CD4-positive, alpha-beta T cell (primary cell): ENCODE measurements at regions of chr10 and their contacts with region 1.

Region 1: GRCh38 chr10:97334370-97335175 is at the start of gene FRAT2:
- DNase-seq: peak; percentile 78 to 95 (median 85)
- ATAC-seq: peak; percentile 88
- H3K4me3 ChIP-seq: peak within 1 kb of the TSS; percentile 76
- H3K4me3 Mint-ChIP-seq: peak within 1 kb of the TSS; percentile 96
- H3K27ac ChIP-seq: peak within 1 kb of the TSS; percentile 97
- H3K27ac Mint-ChIP-seq: peak within 1 kb of the TSS; percentile 91
- H3K4me1 ChIP-seq: peaks cover 43% of the 10 kb centered on the region
- H3K4me1 Mint-ChIP-seq: peaks cover 50% of the 10 kb centered on the region
- H3K27me3 ChIP-seq: no peaks in the 10 kb centered on the region
- H3K27me3 Mint-ChIP-seq: peaks cover 3% of the 10 kb centered on the region
- CTCF ChIP-seq: no peak
- total RNA-seq, gene FRAT2: 27.0 to 27.6 TPM

Region 2: GRCh38 chr10:97292097-97292862 is 42.3 kb before region 1 on chr10 and contains the start of gene ARHGAP19:
- CTCF ChIA-PET with region 1: no interaction called
- POLR2A ChIA-PET with region 1: interaction called, 6 read pairs
- intact Hi-C with region 1: loop called (anchors 1 to 2 kb)
- DNase-seq: peak; percentile 86 to 97 (median 90)
- ATAC-seq: peak; percentile 99
- H3K4me3 ChIP-seq: peak within 1 kb of the TSS; percentile 72
- H3K4me3 Mint-ChIP-seq: peak within 1 kb of the TSS; percentile 95
- H3K27ac ChIP-seq: peak within 1 kb of the TSS; percentile 49 to 65
- H3K27ac Mint-ChIP-seq: peak within 1 kb of the TSS; percentile 50
- H3K4me1 ChIP-seq: peaks cover 13% of the 10 kb centered on the region
- H3K4me1 Mint-ChIP-seq: peaks cover 18% of the 10 kb centered on the region
- H3K27me3 ChIP-seq: no peaks in the 10 kb centered on the region
- H3K27me3 Mint-ChIP-seq: no peaks in the 10 kb centered on the region
- CTCF ChIP-seq: no peak
- total RNA-seq, gene ARHGAP19: 6.9 to 8.8 TPM

Region 3: GRCh38 chr10:97318772-97319651 is 15.6 kb before region 1 on chr10 and contains the start of gene FRAT1:
- CTCF ChIA-PET with region 1: interaction called, 24 read pairs
- POLR2A ChIA-PET with region 1: interaction called, 178 read pairs
- intact Hi-C with region 1: loop called (anchors 1 kb)
- DNase-seq: peak; percentile 85 to 96 (median 89)
- ATAC-seq: peak; percentile 73
- H3K4me3 ChIP-seq: peak within 1 kb of the TSS; percentile 80
- H3K4me3 Mint-ChIP-seq: peak within 1 kb of the TSS; percentile 97
- H3K27ac ChIP-seq: peak within 1 kb of the TSS; percentile 99 to 100
- H3K27ac Mint-ChIP-seq: peak within 1 kb of the TSS; percentile 98
- H3K4me1 ChIP-seq: peaks cover 36% of the 10 kb centered on the region
- H3K4me1 Mint-ChIP-seq: peaks cover 38% of the 10 kb centered on the region
- H3K27me3 ChIP-seq: no peaks in the 10 kb centered on the region
- H3K27me3 Mint-ChIP-seq: no peaks in the 10 kb centered on the region
- CTCF ChIP-seq: no peak
- total RNA-seq, gene FRAT1: 45.2 to 45.5 TPM

Region 4: DNA sequence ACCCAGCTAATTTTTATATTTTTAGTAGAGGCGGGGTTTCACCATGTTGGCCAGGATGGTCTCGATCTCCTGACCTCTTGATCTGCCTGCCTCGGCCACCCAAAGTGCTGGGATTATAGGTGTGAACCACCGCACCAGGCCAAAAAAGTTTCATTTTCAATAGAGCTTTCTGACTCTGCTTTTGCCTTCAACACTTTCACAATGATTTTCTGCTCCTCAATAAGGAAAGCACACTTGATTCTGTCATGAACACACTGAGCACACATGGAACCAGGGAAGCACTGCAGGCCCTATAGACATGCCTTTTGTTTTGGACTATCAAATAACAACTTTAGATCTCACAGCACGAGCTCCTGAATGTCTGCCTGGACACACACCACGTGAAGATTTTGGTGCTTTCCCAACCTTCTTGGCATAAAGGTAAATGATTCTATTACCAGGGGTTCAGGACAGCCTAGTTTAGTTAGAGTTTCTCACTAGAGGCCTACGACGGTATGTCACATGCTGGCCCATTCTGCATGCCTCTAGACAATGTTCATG is 58.5 kb after region 1 on chr10:
- CTCF ChIA-PET with region 1: no interaction called
- POLR2A ChIA-PET with region 1: no interaction called
- intact Hi-C with region 1: no loop called
- DNase-seq: no peak
- ATAC-seq: no peak
- H3K4me3 ChIP-seq: no peak overlapping the region
- H3K4me3 Mint-ChIP-seq: no peak overlapping the region
- H3K27ac ChIP-seq: no peak overlapping the region
- H3K27ac Mint-ChIP-seq: no peak overlapping the region
- H3K4me1 ChIP-seq: no peaks in the 10 kb centered on the region
- H3K4me1 Mint-ChIP-seq: no peaks in the 10 kb centered on the region
- H3K27me3 ChIP-seq: no peaks in the 10 kb centered on the region
- H3K27me3 Mint-ChIP-seq: no peaks in the 10 kb centered on the region
- CTCF ChIP-seq: no peak

Region 5: GRCh38 chr10:97412891-97413304 is 78.3 kb after region 1 on chr10:
- CTCF ChIA-PET with region 1: no interaction called
- POLR2A ChIA-PET with region 1: no interaction called
- intact Hi-C with region 1: no loop called
- DNase-seq: no peak
- ATAC-seq: no peak
- H3K4me3 ChIP-seq: no peak overlapping the region
- H3K4me3 Mint-ChIP-seq: peak overlapping the region; percentile 18
- H3K27ac ChIP-seq: no peak overlapping the region
- H3K27ac Mint-ChIP-seq: peak overlapping the region; percentile 74
- H3K4me1 ChIP-seq: peaks cover 38% of the 10 kb centered on the region
- H3K4me1 Mint-ChIP-seq: peaks cover 36% of the 10 kb centered on the region
- H3K27me3 ChIP-seq: no peaks in the 10 kb centered on the region
- H3K27me3 Mint-ChIP-seq: no peaks in the 10 kb centered on the region
- CTCF ChIP-seq: no peak

Region 6: DNA sequence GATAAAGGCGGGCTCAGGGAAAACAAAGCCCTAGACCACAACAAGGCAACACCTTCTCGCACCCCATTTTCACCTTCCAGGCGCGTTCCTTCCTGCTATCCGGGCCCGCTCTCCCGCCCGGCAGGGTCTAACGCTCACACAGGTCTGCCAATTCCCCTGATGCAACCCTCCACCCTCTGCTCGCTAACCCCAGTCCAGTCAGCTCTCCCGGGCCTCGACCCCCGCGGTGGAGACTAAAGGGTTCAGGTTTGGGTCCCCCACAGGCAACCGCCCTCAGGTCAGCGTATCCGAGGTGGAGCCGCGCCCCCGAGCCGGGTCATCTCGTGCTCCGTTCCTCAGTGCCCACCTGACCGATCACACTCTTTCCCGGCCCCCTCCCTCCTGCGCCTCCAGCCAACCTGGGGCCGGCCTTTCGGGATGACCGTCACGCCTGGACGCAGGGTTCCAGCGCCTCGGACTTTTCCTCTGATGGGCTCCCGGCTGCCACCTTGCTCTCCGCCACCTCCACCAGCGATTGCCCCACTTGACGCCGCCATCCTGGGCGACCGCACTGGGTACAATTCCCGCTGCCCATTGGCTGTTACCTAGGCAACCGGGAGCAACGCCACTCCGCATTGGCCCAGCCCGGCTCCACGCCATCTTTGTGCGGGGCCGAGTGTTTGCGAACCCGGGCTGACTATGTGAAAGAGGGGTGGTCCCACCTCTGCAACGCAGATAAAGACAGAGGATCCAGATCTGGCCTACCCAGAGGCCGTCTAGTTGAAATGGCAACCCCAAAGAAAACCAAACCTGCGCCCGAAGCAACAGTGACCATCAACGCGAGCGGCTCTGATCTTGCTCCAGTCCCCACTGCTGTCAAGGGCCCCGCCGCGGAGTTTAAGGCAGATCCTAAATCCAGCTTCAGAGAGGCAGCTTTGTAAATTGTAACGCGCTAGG is 298.6 kb after region 1 on chr10 and contains the start of gene MORN4:
- CTCF ChIA-PET with region 1: no interaction called
- POLR2A ChIA-PET with region 1: no interaction called
- intact Hi-C with region 1: loop called in 1 of 2 experiments (anchors 5 kb)
- DNase-seq: peak; percentile 85 to 95 (median 89)
- ATAC-seq: peak; percentile 99
- H3K4me3 ChIP-seq: peak within 1 kb of the TSS; percentile 98
- H3K4me3 Mint-ChIP-seq: peak within 1 kb of the TSS; percentile 94
- H3K27ac ChIP-seq: no peak within 1 kb of the TSS
- H3K27ac Mint-ChIP-seq: peak within 1 kb of the TSS; percentile 71
- H3K4me1 ChIP-seq: peaks cover 18% of the 10 kb centered on the region
- H3K4me1 Mint-ChIP-seq: peaks cover 16% of the 10 kb centered on the region
- H3K27me3 ChIP-seq: no peaks in the 10 kb centered on the region
- H3K27me3 Mint-ChIP-seq: no peaks in the 10 kb centered on the region
- CTCF ChIP-seq: no peak
- total RNA-seq, gene MORN4: 0.36 to 0.39 TPM

Region 7: DNA sequence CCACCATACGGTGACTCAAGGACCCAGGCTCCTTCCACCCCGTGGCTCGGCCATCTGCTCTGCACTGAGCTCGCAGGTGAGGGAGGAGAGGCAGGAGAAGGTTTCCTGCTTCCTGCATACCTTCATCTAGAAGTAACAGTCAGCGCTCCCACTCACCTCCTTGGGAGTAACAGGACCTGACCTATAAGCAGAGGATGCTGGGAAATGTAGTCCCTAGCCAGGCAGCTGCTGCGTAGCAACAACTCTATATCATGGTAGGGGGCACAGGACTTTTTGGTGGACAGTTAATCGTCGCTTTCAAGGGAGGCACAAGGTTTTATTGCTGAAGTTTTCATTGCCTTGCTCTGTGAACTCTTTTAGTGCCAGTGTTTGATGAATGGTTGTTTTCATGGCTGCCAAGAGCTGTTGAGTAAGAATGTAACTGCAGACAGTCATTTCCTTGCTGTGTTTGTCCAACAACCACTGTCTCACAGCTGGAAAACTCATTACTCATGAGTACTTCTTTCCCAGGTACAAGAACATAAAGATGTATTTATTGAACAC is 392.1 kb after region 1 on chr10:
- CTCF ChIA-PET with region 1: no interaction called
- POLR2A ChIA-PET with region 1: no interaction called
- intact Hi-C with region 1: no loop called
- DNase-seq: no peak
- ATAC-seq: no peak
- H3K4me3 ChIP-seq: no peak overlapping the region
- H3K4me3 Mint-ChIP-seq: no peak overlapping the region
- H3K27ac ChIP-seq: no peak overlapping the region
- H3K27ac Mint-ChIP-seq: no peak overlapping the region
- H3K4me1 ChIP-seq: no peaks in the 10 kb centered on the region
- H3K4me1 Mint-ChIP-seq: no peaks in the 10 kb centered on the region
- H3K27me3 ChIP-seq: no peaks in the 10 kb centered on the region
- H3K27me3 Mint-ChIP-seq: peaks cover 12% of the 10 kb centered on the region
- CTCF ChIP-seq: no peak

Region 8: DNA sequence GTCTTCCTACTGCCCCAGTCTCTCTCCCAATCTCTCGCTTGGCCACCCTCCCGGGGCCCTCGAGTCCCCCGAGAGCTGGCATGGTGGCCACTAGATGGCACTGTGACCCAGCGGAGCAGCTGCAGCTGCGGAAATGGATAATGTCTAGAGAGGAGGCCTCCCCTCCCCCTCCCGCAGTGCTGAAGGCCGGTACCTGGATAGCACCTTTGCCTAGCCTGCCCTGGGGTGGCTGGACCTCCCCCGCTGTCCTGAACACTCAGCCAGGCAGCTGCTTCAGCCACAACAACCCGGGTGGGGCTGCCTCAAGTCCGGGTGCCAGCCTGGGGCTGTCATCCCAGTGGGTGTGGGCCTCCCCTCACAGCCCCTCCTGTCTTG is 580.3 kb after region 1 on chr10:
- CTCF ChIA-PET with region 1: no interaction called
- POLR2A ChIA-PET with region 1: no interaction called
- intact Hi-C with region 1: no loop called
- DNase-seq: peak; percentile 57 to 80 (median 68)
- ATAC-seq: peak; percentile 84
- H3K4me3 ChIP-seq: no peak overlapping the region
- H3K4me3 Mint-ChIP-seq: no peak overlapping the region
- H3K27ac ChIP-seq: no peak overlapping the region
- H3K27ac Mint-ChIP-seq: no peak overlapping the region
- H3K4me1 ChIP-seq: peaks cover 8% of the 10 kb centered on the region
- H3K4me1 Mint-ChIP-seq: peaks cover 15% of the 10 kb centered on the region
- H3K27me3 ChIP-seq: no peaks in the 10 kb centered on the region
- H3K27me3 Mint-ChIP-seq: peaks cover 21% of the 10 kb centered on the region
- CTCF ChIP-seq: peak; percentile 85